Ascending aorta (tissue), 2 donors: ENCODE measurements at regions of chr19 and their contacts with region 1.

Region 1: GRCh38 chr19:10106100-10106936 is at the start of gene PPAN:
- DNase-seq: peak; percentile 91 to 98
- H3K4me3 ChIP-seq: peak within 1 kb of the TSS; percentile 69 to 88
- H3K27ac ChIP-seq: peak within 1 kb of the TSS; percentile 60 to 69
- H3K4me1 ChIP-seq: peaks cover 3 to 7% of the 10 kb centered on the region in 2 donors
- H3K27me3 ChIP-seq: no peaks in the 10 kb centered on the region
- CTCF ChIP-seq: no peak
- total RNA-seq, gene PPAN: not detected

Region 2: DNA sequence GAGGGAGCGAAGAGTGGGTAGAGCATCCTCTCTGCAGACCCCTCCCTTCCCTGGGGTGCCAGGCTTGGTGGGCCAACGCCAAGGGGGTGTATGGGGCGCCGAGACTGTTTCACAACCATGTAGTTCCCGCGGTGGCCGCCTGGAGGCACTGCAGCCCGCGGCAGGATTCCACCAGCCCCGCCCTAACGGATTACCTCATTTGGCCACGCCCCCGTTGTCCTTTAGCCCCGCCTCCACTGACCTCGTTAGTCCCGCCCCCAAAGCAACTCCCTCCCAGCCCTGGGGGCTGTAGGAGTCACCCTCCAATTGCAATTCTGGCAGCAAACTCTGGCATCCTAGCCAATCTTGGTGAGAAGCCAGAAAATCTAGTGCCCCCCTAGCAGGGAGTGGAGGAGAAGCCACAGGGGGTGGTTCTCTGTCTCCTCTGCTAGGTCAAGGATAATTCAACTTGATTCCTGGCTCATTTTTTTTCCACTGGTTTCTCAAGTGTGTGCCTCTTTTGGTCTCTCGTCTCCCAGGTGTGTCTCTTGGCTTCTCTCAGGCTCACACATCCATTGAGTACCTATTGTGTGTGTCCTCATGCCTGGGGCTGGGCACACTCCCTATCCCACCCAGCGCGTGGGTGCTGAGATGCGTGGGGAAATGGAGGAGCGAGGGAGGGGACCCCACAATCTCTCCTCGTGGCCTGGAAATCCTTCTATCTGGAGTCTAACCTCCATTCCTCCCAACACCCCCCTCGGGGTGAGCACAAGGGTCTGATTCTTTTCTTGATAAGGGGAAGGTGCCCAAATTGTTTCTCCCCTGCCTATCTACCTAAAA is 172.0 kb before region 1 on chr19:
- intact Hi-C with region 1: loop called (anchors 10 kb)
- DNase-seq: peak in 1 of 2 donors; percentile 77
- H3K4me3 ChIP-seq: no peak overlapping the region
- H3K27ac ChIP-seq: no peak overlapping the region
- H3K4me1 ChIP-seq: peaks cover 2 to 11% of the 10 kb centered on the region in 2 donors
- H3K27me3 ChIP-seq: peaks cover 9% of the 10 kb centered on the region
- CTCF ChIP-seq: peak; percentile 79 to 81 (median 79)

Region 3: DNA sequence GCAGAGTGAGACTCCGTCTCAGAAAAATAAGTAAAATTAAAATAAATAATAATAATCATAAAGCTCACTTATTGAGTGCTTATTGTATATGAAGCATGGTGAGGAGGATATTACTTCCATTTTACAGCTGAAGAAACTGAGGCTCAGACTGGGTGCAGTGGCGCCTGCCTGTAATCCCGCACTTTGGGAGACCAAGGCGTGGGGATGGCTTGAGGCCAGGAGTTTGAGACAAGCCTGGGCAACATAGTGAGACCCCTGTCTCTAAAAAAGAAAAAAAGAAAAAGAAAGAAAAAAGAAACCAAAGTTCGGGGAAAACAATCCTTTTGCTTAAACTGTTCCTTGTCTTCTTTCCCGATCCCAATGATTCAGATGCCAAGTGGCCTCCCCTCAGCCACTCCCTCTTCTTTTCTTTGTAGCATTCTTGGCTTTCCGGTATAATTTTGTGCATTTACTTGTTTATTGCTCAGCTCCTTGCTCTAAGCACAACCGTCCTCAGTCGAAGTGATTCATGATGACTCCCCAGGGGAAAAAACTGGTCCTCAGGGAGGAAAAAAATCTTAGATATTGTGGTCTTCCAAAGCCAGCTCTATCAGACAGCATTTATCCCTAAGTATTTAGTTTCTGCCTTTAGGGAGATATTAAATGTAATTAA is 14.3 kb after region 1 on chr19:
- intact Hi-C with region 1: loop called (anchors 1 kb)
- DNase-seq: peak in 1 of 2 donors; percentile 80
- H3K4me3 ChIP-seq: peak overlapping the region in 1 of 2 donors; percentile 99
- H3K27ac ChIP-seq: peak overlapping the region; percentile 84 to 87
- H3K4me1 ChIP-seq: peaks cover 15 to 27% of the 10 kb centered on the region in 2 donors
- H3K27me3 ChIP-seq: no peaks in the 10 kb centered on the region
- CTCF ChIP-seq: no peak